Naive thymus-derived CD4-positive, alpha-beta T cell (primary cell): ENCODE measurements at regions of chrX and their contacts with region 1.

Region 1: GRCh38 chrX:148133105-148133725 is 152.1 kb downstream of the FMR1NB start:
- DNase-seq: peak in 5 of 9 donors; percentile 12 to 47 (median 38)
- ATAC-seq: no peak
- H3K4me3 ChIP-seq: no peak overlapping the region
- H3K4me3 Mint-ChIP-seq: no peak overlapping the region
- H3K27ac ChIP-seq: no peak overlapping the region
- H3K27ac Mint-ChIP-seq: peak overlapping the region in 1 of 9 donors; percentile 23
- H3K4me1 ChIP-seq: no peaks in the 10 kb centered on the region
- H3K4me1 Mint-ChIP-seq: peaks cover 0 to 5% (median 0%) of the 10 kb centered on the region in 7 donors
- H3K27me3 ChIP-seq: no peaks in the 10 kb centered on the region
- H3K27me3 Mint-ChIP-seq: no peaks in the 10 kb centered on the region

Region 2: GRCh38 chrX:148500423-148501385 is 367.5 kb after region 1 on chrX and contains the start of gene AFF2:
- CTCF ChIA-PET with region 1: no interaction called
- POLR2A ChIA-PET with region 1: no interaction called
- intact Hi-C with region 1: loop called in 1 of 2 experiments (anchors 10 kb)
- DNase-seq: peak in 8 of 9 donors; percentile 18 to 46 (median 30)
- ATAC-seq: peak; percentile 73
- H3K4me3 ChIP-seq: peak within 1 kb of the TSS; percentile 38
- H3K4me3 Mint-ChIP-seq: peak within 1 kb of the TSS; percentile 79 to 92 (median 86)
- H3K27ac ChIP-seq: no peak within 1 kb of the TSS
- H3K27ac Mint-ChIP-seq: no peak within 1 kb of the TSS
- H3K4me1 ChIP-seq: no peaks in the 10 kb centered on the region
- H3K4me1 Mint-ChIP-seq: peaks cover 2 to 30% (median 13%) of the 10 kb centered on the region in 7 donors
- H3K27me3 ChIP-seq: no peaks in the 10 kb centered on the region
- H3K27me3 Mint-ChIP-seq: peaks cover 0 to 19% (median 0%) of the 10 kb centered on the region in 5 donors
- total RNA-seq, gene AFF2: 2.7 to 6.0 (median 4.7) TPM

Region 3: GRCh38 chrX:148574237-148574973 is 441.2 kb after region 1 on chrX:
- CTCF ChIA-PET with region 1: no interaction called
- POLR2A ChIA-PET with region 1: no interaction called
- intact Hi-C with region 1: loop called in 1 of 2 experiments (anchors 10 kb)
- DNase-seq: no peak
- ATAC-seq: no peak
- H3K4me3 ChIP-seq: no peak overlapping the region
- H3K4me3 Mint-ChIP-seq: no peak overlapping the region
- H3K27ac ChIP-seq: no peak overlapping the region
- H3K27ac Mint-ChIP-seq: no peak overlapping the region
- H3K4me1 ChIP-seq: no peaks in the 10 kb centered on the region
- H3K4me1 Mint-ChIP-seq: peaks cover 0 to 5% (median 0%) of the 10 kb centered on the region in 7 donors
- H3K27me3 ChIP-seq: no peaks in the 10 kb centered on the region
- H3K27me3 Mint-ChIP-seq: no peaks in the 10 kb centered on the region

Region 4: DNA sequence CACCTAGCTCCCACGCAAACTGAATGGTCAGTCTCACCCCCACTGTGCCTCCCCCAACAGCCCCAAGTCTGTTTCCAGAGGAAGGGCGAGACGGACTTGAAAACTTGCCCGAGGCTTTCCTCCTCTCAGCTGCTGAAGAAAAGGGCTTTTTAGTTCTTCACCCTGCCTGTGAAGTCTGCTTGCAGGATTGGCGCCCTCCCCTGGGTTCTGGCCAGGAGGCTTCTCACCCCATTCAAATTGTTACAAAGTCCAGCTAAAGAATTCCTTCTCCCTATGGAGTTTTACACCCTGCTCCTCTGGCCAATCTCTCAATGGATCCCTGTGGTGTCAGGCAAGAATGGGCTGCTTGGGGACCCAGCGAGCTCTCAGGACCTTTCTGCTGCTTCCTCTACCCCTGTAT is 608.2 kb after region 1 on chrX:
- CTCF ChIA-PET with region 1: no interaction called
- POLR2A ChIA-PET with region 1: no interaction called
- intact Hi-C with region 1: loop called in 1 of 2 experiments (anchors 10 kb)
- DNase-seq: no peak
- ATAC-seq: no peak
- H3K4me3 ChIP-seq: no peak overlapping the region
- H3K4me3 Mint-ChIP-seq: no peak overlapping the region
- H3K27ac ChIP-seq: no peak overlapping the region
- H3K27ac Mint-ChIP-seq: no peak overlapping the region
- H3K4me1 ChIP-seq: no peaks in the 10 kb centered on the region
- H3K4me1 Mint-ChIP-seq: peaks cover 0 to 12% (median 0%) of the 10 kb centered on the region in 7 donors
- H3K27me3 ChIP-seq: no peaks in the 10 kb centered on the region
- H3K27me3 Mint-ChIP-seq: no peaks in the 10 kb centered on the region

Region 5: DNA sequence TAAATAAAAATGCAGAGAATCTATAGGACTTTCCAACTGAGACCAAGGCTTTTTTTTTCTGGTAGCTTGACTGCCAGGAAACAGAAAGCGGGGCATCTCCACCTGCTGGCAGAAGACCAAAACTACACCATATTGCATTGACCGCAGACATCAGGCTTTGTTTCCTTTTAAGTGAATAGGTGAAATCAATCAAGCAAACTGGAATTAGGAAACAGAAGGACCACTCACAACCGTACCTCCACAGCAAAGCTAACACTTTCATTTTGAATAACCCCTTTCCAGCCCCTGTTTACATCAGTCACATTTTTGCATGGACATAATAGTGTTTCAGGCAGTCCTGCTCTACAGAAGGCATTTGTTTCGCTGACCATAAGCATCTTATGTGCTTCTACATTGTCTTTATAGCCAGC is 1153.7 kb after region 1 on chrX:
- CTCF ChIA-PET with region 1: interaction called, 13 read pairs
- POLR2A ChIA-PET with region 1: no interaction called
- intact Hi-C with region 1: loop called (anchors 1 kb)
- DNase-seq: peak in 8 of 9 donors; percentile 8 to 65 (median 45)
- ATAC-seq: peak; percentile 53
- H3K4me3 ChIP-seq: no peak overlapping the region
- H3K4me3 Mint-ChIP-seq: no peak overlapping the region
- H3K27ac ChIP-seq: no peak overlapping the region
- H3K27ac Mint-ChIP-seq: no peak overlapping the region
- H3K4me1 ChIP-seq: no peaks in the 10 kb centered on the region
- H3K4me1 Mint-ChIP-seq: peaks cover 0 to 12% (median 0%) of the 10 kb centered on the region in 7 donors
- H3K27me3 ChIP-seq: no peaks in the 10 kb centered on the region
- H3K27me3 Mint-ChIP-seq: peaks cover 0 to 5% (median 0%) of the 10 kb centered on the region in 5 donors